ENCODE measurements at regions of chr16 and their contacts with region 1.

Region 1: DNA sequence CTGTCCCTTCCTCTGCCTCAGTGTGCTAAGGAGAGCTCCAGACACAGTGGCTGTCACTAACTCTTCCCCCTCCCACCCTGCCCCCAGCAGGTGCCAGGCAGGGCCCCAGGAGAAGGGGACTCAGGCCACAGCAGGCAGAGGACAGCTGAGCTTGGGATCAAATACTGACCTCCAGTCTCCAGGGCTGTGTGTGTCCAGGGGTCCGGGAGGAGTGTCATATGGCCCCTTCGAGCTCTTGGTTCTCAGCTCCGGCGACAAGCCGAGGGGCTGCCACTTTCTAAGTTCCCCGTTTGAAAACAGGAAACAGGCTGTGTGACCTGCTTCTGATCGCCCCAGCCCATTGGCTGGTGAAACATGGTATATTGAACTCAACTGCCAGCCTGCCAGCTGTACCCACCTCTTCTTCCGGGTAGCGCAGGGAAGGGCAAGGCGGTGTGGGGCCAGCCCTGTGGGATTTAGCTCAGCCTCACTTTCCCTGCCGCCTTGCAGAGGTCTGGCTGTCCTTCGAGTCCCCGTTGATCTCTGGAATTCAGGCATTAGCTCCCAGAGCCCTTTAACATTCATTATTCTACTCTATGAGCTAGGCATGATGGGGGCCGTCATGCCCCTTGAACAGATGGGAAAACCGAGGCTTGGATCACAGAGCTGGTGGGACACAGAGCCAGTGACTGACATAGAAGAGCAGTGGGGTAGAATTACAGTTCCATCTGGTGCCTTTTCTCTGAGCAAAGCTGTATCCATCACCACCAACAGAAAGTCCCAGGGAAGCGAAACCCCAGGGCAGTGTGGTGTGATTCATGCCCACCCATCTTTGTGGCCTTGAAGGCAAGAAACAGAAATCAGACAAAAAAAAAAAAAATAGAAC is at the start of gene SNX20:
- H3K4me3 Mint-ChIP-seq: peak within 1 kb of the TSS; percentile 90
- H3K27ac Mint-ChIP-seq: peak within 1 kb of the TSS; percentile 90
- H3K4me1 Mint-ChIP-seq: peaks cover 80% of the 10 kb centered on the region
- H3K27me3 Mint-ChIP-seq: no peaks in the 10 kb centered on the region

Region 2: DNA sequence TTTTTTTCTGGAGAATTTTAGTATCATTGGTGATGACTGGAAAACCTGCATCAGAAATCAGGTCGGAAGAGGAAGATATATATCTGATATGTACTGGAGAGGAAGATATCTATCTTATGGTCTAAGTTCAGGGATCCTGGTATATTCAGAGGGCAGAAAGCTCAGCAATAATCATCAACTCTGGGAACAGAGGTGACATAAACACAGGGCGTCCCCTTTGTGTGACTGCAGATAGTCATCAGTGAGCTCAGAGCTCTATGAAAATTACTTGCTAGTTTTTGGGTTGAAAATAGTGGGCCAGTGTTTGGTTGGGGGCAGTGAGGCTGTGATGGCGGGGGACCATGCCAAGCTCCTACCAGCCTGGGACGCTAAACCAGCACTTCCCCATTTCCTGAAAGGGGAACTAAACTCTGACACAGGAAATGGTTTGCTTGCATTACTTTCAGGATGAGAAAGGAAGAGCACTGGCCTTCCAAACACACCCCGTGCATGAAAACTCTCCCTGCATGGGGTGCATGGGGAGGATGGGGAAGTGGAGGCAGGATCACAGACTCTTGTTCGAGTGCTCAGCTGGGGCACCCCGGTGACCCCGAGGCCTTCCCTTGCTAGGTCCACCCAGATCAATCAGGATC is 27.9 kb after region 1 on chr16:
- intact Hi-C with region 1: loop called (anchors 2 kb)
- H3K4me3 Mint-ChIP-seq: peak overlapping the region; percentile 64
- H3K27ac Mint-ChIP-seq: peak overlapping the region; percentile 99
- H3K4me1 Mint-ChIP-seq: peaks cover 95% of the 10 kb centered on the region
- H3K27me3 Mint-ChIP-seq: no peaks in the 10 kb centered on the region

Region 3: GRCh38 chr16:51376080-51376479 is 694.8 kb after region 1 on chr16:
- intact Hi-C with region 1: no loop called
- H3K4me3 Mint-ChIP-seq: no peak overlapping the region
- H3K27ac Mint-ChIP-seq: no peak overlapping the region
- H3K4me1 Mint-ChIP-seq: no peaks in the 10 kb centered on the region
- H3K27me3 Mint-ChIP-seq: no peaks in the 10 kb centered on the region